Naive thymus-derived CD4-positive, alpha-beta T cell (primary cell): ENCODE measurements at regions of chr4 and their contacts with region 1.

Region 1: GRCh38 chr4:113394730-113395530 is 345.5 kb downstream of the ANK2 start:
- DNase-seq: peak in 8 of 9 donors; percentile 35 to 77 (median 66)
- ATAC-seq: peak; percentile 90
- H3K4me3 ChIP-seq: no peak overlapping the region
- H3K4me3 Mint-ChIP-seq: no peak overlapping the region
- H3K27ac ChIP-seq: no peak overlapping the region
- H3K27ac Mint-ChIP-seq: no peak overlapping the region
- H3K4me1 ChIP-seq: no peaks in the 10 kb centered on the region
- H3K4me1 Mint-ChIP-seq: peaks cover 0 to 2% (median 0%) of the 10 kb centered on the region in 7 donors
- H3K27me3 ChIP-seq: no peaks in the 10 kb centered on the region
- H3K27me3 Mint-ChIP-seq: peaks cover 0 to 7% (median 4%) of the 10 kb centered on the region in 5 donors

Region 2: GRCh38 chr4:113908829-113909228 is 513.9 kb after region 1 on chr4:
- CTCF ChIA-PET with region 1: interaction called, 3 read pairs
- POLR2A ChIA-PET with region 1: no interaction called
- intact Hi-C with region 1: loop called (anchors 1 kb)
- DNase-seq: peak in 5 of 9 donors; percentile 10 to 31 (median 26)
- ATAC-seq: no peak
- H3K4me3 ChIP-seq: no peak overlapping the region
- H3K4me3 Mint-ChIP-seq: no peak overlapping the region
- H3K27ac ChIP-seq: no peak overlapping the region
- H3K27ac Mint-ChIP-seq: peak overlapping the region in 2 of 9 donors; percentile 2 to 7
- H3K4me1 ChIP-seq: peaks cover 12 to 24% of the 10 kb centered on the region in 2 donors
- H3K4me1 Mint-ChIP-seq: peaks cover 6 to 57% (median 46%) of the 10 kb centered on the region in 7 donors
- H3K27me3 ChIP-seq: no peaks in the 10 kb centered on the region
- H3K27me3 Mint-ChIP-seq: no peaks in the 10 kb centered on the region

Region 3: DNA sequence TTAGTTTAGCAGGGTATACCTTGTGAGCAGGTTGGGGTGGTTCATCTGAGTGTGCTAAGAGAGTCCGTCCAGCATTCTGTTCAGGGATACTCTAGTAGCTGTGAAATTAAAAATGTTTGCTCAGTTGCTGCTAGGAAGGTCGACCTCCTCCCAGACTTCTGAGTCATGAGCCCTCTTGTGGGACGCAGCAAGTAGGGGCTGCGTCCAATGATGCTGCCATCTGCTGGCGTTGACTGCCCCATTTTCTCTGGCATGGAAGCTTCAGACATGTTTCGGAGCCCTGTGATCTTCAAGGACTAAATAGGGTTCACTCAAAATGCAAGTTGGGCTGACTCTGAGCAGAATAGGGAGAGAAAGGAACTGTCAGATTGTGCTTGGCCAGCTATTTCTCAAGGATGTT is 785.6 kb after region 1 on chr4:
- CTCF ChIA-PET with region 1: no interaction called
- POLR2A ChIA-PET with region 1: no interaction called
- intact Hi-C with region 1: loop called (anchors 1 to 2 kb)
- DNase-seq: peak in 6 of 9 donors; percentile 1 to 27 (median 16)
- ATAC-seq: peak; percentile 29
- H3K4me3 ChIP-seq: no peak overlapping the region
- H3K4me3 Mint-ChIP-seq: no peak overlapping the region
- H3K27ac ChIP-seq: no peak overlapping the region
- H3K27ac Mint-ChIP-seq: no peak overlapping the region
- H3K4me1 ChIP-seq: no peaks in the 10 kb centered on the region
- H3K4me1 Mint-ChIP-seq: no peaks in the 10 kb centered on the region
- H3K27me3 ChIP-seq: no peaks in the 10 kb centered on the region
- H3K27me3 Mint-ChIP-seq: peaks cover 0 to 8% (median 0%) of the 10 kb centered on the region in 5 donors

Region 4: DNA sequence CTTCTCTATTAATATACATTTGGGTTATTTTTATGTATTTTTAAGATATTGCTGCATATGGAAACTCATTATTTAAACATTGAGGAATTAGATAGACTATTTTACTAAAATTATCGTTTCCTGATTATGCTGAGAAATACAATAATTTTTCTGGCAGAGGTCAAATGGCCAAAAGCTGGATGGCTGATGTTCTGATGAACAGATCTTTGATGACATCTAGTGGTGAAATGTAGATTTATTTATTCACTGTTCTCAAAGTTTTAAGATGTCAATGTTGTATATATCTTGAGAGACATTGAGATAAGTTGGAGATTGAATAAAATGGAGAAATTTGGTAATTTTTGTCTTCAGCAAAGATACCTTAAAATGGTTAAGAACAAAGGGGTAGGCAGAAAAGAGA is 1299.8 kb after region 1 on chr4:
- CTCF ChIA-PET with region 1: interaction called, 4 read pairs
- POLR2A ChIA-PET with region 1: interaction called, 3 read pairs
- intact Hi-C with region 1: loop called (anchors 1 to 2 kb)
- DNase-seq: peak in 5 of 9 donors; percentile 1 to 17 (median 9)
- ATAC-seq: no peak
- H3K4me3 ChIP-seq: no peak overlapping the region
- H3K4me3 Mint-ChIP-seq: no peak overlapping the region
- H3K27ac ChIP-seq: no peak overlapping the region
- H3K27ac Mint-ChIP-seq: no peak overlapping the region
- H3K4me1 ChIP-seq: no peaks in the 10 kb centered on the region
- H3K4me1 Mint-ChIP-seq: peaks cover 0 to 6% (median 0%) of the 10 kb centered on the region in 7 donors
- H3K27me3 ChIP-seq: no peaks in the 10 kb centered on the region
- H3K27me3 Mint-ChIP-seq: peaks cover 0 to 16% (median 7%) of the 10 kb centered on the region in 5 donors